ENCODE measurements at regions of chr20 and their contacts with region 1.

Region 1: GRCh38 chr20:33926425-33926824 is 67.3 kb upstream of the RALY start:
- DNase-seq: no peak
- ATAC-seq: no peak
- H3K4me3 ChIP-seq: no peak overlapping the region
- H3K27ac ChIP-seq: no peak overlapping the region
- H3K4me1 ChIP-seq: no peaks in the 10 kb centered on the region
- CTCF ChIP-seq: no peak
- EP300 ChIP-seq: no peak
- POLR2A ChIP-seq: no peak
- RAD21 ChIP-seq: no peak

Region 2: DNA sequence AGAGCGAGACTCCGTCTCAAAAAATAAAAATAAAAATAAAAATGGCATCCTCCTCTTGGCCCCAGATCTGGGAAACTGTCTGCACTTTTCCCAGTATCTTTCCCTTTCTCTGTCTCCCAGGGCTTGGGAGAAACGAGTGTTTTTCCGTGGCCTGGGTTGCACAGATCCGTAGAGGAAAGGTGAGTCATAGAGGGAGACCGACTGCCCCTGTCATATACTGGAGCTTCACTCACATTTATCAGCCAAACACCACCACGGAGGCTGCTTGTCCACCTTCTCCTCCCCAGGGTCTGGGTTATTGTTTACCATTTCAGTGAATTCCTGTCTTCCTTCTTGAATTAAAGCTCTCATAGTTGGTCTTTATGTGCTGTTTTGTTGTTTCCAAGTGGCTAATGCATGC is 217.5 kb after region 1 on chr20:
- CTCF ChIA-PET with region 1: no interaction called
- POLR2A ChIA-PET with region 1: interaction called, 10 read pairs
- DNase-seq: peak in 1 of 2 experiments; percentile 9
- ATAC-seq: peak; percentile 40 to 67; a peak in 1 of 6 replicates
- H3K4me3 ChIP-seq: no peak overlapping the region
- H3K27ac ChIP-seq: no peak overlapping the region
- H3K4me1 ChIP-seq: no peaks in the 10 kb centered on the region
- CTCF ChIP-seq: no peak
- EP300 ChIP-seq: no peak
- POLR2A ChIP-seq: no peak
- RAD21 ChIP-seq: no peak